ENCODE measurements at regions of chr15 and their contacts with region 1.

Region 1: GRCh38 chr15:43868406-43868805 is 41.6 kb downstream of the WDR76 start:
- DNase-seq: no peak
- H3K4me3 ChIP-seq: no peak overlapping the region
- H3K27ac ChIP-seq: no peak overlapping the region
- H3K4me1 ChIP-seq: no peaks in the 10 kb centered on the region
- H3K27me3 ChIP-seq: no peaks in the 10 kb centered on the region
- CTCF ChIP-seq: no peak

Region 2: DNA sequence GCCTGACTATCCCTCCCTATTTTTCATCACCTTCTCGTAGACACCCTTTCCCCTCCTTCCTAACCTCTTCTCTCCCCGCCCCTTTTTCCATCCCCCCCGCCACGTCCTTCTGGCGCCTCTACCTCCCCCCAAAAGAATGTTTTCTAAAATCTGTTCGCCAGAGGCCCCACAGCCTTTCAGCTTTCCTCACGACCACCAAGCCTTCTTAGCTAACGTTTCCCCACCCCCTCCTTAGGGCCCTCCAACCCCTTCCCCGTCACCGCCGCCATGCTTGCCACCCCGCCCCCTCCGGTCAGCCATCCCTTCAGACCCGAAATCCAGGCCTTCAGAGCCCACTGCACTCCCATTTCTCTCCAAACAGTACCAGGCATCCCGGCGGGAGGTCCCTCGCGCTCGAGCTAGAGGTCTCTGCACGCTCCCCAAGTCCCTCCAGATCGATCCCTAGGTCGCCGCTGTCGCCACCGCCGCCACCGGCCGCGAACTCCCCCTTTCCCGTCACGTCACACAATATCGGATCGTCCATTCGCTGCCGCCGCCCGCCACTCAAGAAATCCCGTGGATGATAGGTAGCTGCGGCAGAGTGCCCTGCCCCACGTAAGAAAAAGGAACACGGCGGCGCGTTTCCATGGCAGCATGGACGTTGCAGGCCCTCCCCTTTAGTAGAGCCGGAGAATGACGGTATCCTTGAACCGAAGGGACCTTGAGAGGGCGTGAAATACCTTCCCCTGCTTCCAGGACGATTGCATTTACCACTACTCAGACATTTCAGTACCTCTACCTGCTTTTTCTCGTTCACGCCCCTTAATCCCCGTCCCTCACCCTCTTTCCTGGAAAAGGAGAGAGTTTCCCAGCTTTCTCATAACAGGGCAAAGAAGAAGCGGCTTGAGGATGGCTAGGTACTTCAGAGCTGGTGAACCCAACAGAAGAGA is 375.5 kb before region 1 on chr15 and contains the start of gene TP53BP1:
- intact Hi-C with region 1: no loop called
- DNase-seq: peak; percentile 97 to 98
- H3K4me3 ChIP-seq: peak within 1 kb of the TSS; percentile 69 to 93
- H3K27ac ChIP-seq: peak within 1 kb of the TSS; percentile 78 to 80
- H3K4me1 ChIP-seq: peaks cover 0 to 22% (median 4%) of the 10 kb centered on the region in 4 donors
- H3K27me3 ChIP-seq: no peaks in the 10 kb centered on the region
- CTCF ChIP-seq: no peak

Region 3: DNA sequence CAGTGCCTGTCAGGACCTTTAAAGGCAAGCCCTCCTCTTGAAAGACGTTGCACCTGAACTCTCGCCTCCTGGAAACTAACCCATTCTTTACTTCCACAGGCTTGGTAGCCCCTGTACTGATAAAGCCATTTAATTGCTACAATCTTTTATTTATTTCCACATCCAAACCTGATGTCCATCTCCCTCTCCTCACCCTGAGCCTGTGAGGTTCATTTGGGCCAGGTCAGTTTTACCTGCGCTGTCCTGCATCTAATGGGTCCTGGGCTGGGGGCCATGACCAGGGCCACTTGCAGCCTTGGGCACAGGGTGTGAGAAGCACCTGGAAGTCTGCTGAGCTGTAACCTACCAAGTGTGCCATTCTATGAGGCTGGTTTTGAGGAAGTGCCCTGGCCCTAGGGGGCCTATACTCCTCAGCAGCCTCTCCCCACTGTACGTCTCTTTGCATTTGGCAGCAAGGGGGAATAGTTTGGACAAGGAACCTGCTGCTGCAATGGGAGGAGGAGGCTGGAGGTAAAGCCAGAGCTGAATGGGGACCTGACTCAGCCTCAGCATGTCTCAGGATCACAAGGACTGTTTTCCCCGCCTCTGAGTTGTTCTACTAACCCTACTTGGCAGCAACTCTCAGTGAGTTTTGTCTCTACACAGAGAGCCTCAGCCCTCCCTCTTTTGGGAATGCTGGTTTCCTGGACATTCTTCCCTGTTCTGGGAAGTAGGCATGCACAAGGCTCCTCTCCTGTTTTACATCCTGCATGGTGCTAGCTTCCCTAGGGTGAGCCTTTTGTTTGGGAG is 12.2 kb after region 1 on chr15:
- intact Hi-C with region 1: loop called (anchors 1 kb)
- DNase-seq: no peak
- H3K4me3 ChIP-seq: no peak overlapping the region
- H3K27ac ChIP-seq: no peak overlapping the region
- H3K4me1 ChIP-seq: no peaks in the 10 kb centered on the region
- H3K27me3 ChIP-seq: no peaks in the 10 kb centered on the region
- CTCF ChIP-seq: no peak

Region 4: DNA sequence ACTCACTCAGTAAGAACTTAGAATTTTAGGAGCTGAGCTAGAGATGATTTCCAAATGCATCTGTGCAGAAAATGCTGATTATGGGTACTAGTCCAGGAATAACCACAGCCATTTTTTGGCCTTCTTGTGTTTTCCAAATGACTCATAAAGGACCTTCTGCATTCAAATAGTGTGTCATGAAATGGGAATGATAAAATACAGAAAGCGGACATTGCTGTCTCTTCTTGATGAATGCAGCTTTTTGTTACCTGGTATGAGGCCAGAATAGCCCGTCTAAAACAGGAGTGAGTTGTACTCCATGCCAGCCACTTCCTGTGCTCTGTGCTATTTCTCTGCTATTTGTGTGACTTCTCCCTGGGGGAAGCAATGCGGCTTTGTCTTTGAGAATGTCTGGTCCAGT is 347.2 kb after region 1 on chr15:
- intact Hi-C with region 1: loop called (anchors 10 kb)
- DNase-seq: no peak
- H3K4me3 ChIP-seq: no peak overlapping the region
- H3K27ac ChIP-seq: no peak overlapping the region
- H3K4me1 ChIP-seq: peaks cover 0 to 4% (median 0%) of the 10 kb centered on the region in 4 donors
- H3K27me3 ChIP-seq: peaks cover 0 to 3% of the 10 kb centered on the region in 2 donors
- CTCF ChIP-seq: no peak

Measured in tibial artery (tissue), 4 donors.